ENCODE measurements at regions of chr1 and their contacts with region 1.

Region 1: DNA sequence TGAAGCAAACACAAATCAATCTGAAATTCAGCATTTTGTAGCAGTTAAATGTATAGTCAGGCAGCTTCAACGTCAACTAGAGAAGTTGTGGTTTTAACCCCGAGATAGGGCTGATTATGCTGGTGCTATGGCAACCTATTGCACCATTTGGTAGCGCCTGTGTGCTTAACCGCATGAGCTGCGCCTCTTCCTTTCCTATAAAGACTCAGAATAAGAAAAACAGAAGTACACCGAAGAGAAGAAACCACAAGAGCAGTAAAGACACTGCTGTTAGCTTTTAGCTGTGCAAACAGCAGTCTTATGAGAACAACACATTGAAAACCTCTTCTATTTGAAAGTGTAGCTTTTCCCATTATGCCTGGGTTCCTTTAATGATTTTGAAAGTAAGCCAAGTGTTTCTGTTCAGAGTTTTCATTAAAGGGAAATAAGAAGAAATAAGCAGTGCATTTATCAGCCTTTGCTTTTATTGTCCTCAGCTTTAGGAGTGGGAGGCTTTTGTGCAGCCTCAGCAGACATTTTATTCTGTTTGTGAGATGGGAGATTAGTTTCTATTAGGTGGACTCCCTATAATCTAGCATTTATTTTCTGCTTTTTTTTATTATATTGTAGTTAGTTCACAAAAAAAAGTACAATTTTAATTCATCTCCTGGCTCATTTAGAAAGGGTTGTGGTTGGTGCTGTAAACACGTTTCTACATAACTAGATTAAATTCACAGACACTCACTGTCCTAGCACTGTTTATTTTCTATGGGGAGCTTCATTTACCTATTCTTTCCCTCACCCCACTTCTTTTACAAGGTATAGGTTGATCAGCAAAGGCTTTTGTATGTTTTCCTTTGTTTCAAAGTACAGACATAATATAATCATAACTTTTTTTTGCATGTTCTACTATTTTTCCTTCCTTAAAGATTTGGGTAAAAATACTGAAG is 43.3 kb downstream of the PTPRC start:
- DNase-seq: peak; percentile 76
- H3K4me3 ChIP-seq: peak overlapping the region in 1 of 3 experiments; percentile 17
- H3K27ac ChIP-seq: peak overlapping the region; percentile 14
- H3K4me1 ChIP-seq: peaks cover 9% of the 10 kb centered on the region
- H3K27me3 ChIP-seq: no peaks in the 10 kb centered on the region
- CTCF ChIP-seq: no peak
- POLR2A ChIP-seq: no peak

Region 2: DNA sequence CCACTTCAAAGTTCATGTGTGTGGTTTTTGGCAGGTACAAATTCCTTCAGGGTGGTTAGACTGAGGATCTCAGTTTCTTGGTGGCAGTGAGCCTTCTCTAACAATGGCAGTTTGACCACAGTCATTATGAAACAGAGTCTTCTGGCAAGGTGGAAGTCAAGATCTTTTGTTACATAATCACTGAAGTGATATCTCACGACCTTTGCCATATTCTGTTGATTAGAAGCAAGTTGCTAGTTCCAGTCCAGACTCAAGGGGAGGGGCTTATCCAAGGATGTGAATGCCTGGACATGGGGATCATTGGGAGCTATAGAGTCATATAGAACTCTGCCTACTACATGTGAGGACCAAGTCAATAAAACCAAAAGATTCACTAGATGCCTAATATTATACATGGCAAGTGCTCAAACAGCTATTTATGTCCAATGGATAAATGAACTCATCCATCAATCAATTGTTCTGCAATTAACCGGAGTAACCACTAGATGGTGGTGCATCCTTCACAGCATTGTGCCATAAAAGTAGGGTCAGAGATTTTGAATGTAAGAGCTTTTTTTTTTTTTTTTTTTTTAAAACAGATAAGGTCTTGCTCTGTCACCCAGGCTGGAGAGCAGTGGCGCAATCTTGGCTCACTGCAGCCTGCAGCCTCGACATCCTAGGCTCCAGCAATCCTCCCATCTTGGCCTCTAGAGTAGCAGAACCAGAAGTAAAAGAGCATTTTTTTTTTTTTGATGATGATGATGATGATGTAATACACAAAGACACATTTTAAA is 1282.2 kb before region 1 on chr1:
- CTCF ChIA-PET with region 1: interaction called, 19 read pairs
- POLR2A ChIA-PET with region 1: no interaction called
- dilution Hi-C with region 1: no loop called
- intact Hi-C with region 1: loop called (anchors 10 kb)
- DNase-seq: peak; percentile 60
- H3K4me3 ChIP-seq: no peak overlapping the region
- H3K27ac ChIP-seq: no peak overlapping the region
- H3K4me1 ChIP-seq: no peaks in the 10 kb centered on the region
- H3K27me3 ChIP-seq: no peaks in the 10 kb centered on the region
- CTCF ChIP-seq: peak; percentile 50 to 55
- POLR2A ChIP-seq: no peak

Region 3: GRCh38 chr1:197614916-197615692 is 1067.0 kb before region 1 on chr1:
- CTCF ChIA-PET with region 1: interaction called, 19 read pairs
- POLR2A ChIA-PET with region 1: no interaction called
- dilution Hi-C with region 1: no loop called
- intact Hi-C with region 1: loop called (anchors 2 kb)
- DNase-seq: peak; percentile 55
- H3K4me3 ChIP-seq: no peak overlapping the region
- H3K27ac ChIP-seq: no peak overlapping the region
- H3K4me1 ChIP-seq: no peaks in the 10 kb centered on the region
- H3K27me3 ChIP-seq: no peaks in the 10 kb centered on the region
- CTCF ChIP-seq: peak; percentile 51 to 57
- POLR2A ChIP-seq: no peak

Region 4: DNA sequence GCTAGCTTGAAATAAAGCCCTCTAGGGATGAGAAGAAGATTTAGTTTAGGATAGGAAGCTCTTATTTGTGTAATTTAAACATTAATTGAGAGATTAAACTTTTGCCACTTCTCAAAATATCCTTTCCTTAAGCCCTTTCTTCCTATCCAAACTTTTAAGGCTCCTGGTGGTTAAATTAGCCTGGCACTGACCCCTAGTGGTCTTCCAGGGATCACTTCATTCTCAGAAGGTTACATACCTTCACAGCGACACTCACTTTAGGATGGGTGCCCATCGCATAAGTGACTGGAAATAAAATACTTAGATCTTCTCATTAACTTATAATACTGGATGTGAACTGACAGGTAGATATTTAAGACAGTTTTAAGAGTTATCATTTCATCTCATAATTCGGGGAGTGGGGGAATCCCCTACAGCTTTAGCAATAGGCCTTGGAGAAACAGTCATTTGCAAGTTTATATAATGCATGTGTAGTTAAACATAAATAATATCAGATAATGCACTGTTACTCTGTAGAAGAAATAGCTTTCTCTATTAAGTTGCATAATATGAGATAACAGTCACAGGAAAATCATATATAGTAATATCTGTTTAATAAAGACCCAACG is 757.5 kb before region 1 on chr1:
- CTCF ChIA-PET with region 1: interaction called, 10 read pairs
- POLR2A ChIA-PET with region 1: no interaction called
- dilution Hi-C with region 1: no loop called
- intact Hi-C with region 1: loop called (anchors 5 kb)
- DNase-seq: peak; percentile 58
- H3K4me3 ChIP-seq: no peak overlapping the region
- H3K27ac ChIP-seq: no peak overlapping the region
- H3K4me1 ChIP-seq: peaks cover 3% of the 10 kb centered on the region
- H3K27me3 ChIP-seq: peaks cover 27 to 33% of the 10 kb centered on the region in 2 experiments
- CTCF ChIP-seq: peak; percentile 60 to 63
- POLR2A ChIP-seq: no peak

Region 5: GRCh38 chr1:198205016-198205684 is 476.9 kb before region 1 on chr1:
- CTCF ChIA-PET with region 1: interaction called, 4 read pairs
- POLR2A ChIA-PET with region 1: no interaction called
- dilution Hi-C with region 1: no loop called
- intact Hi-C with region 1: loop called (anchors 5 kb)
- DNase-seq: no peak
- H3K4me3 ChIP-seq: no peak overlapping the region
- H3K27ac ChIP-seq: no peak overlapping the region
- H3K4me1 ChIP-seq: peaks cover 2% of the 10 kb centered on the region
- H3K27me3 ChIP-seq: no peaks in the 10 kb centered on the region
- CTCF ChIP-seq: no peak
- POLR2A ChIP-seq: no peak

Region 6: GRCh38 chr1:198465201-198466144 is 216.6 kb before region 1 on chr1:
- CTCF ChIA-PET with region 1: interaction called, 34 read pairs
- POLR2A ChIA-PET with region 1: no interaction called
- dilution Hi-C with region 1: no loop called
- intact Hi-C with region 1: loop called (anchors 1 kb)
- DNase-seq: peak; percentile 83
- H3K4me3 ChIP-seq: no peak overlapping the region
- H3K27ac ChIP-seq: peak overlapping the region; percentile 53
- H3K4me1 ChIP-seq: peaks cover 9% of the 10 kb centered on the region
- H3K27me3 ChIP-seq: no peaks in the 10 kb centered on the region
- CTCF ChIP-seq: peak; percentile 22 to 48
- POLR2A ChIP-seq: no peak

Region 7: GRCh38 chr1:198699167-198700015 is 17.3 kb after region 1 on chr1:
- CTCF ChIA-PET with region 1: interaction called, 13 read pairs
- POLR2A ChIA-PET with region 1: no interaction called
- dilution Hi-C with region 1: no loop called
- intact Hi-C with region 1: no loop called
- DNase-seq: peak; percentile 61
- H3K4me3 ChIP-seq: no peak overlapping the region
- H3K27ac ChIP-seq: no peak overlapping the region
- H3K4me1 ChIP-seq: no peaks in the 10 kb centered on the region
- H3K27me3 ChIP-seq: peaks cover 0 to 4% of the 10 kb centered on the region in 2 experiments
- CTCF ChIP-seq: peak; percentile 73 to 90
- POLR2A ChIP-seq: no peak

Measured in endothelial cell of umbilical vein (primary cell).